AG04450 (cell line): ENCODE measurements at regions of chr4 and their contacts with region 1.

Region 1: DNA sequence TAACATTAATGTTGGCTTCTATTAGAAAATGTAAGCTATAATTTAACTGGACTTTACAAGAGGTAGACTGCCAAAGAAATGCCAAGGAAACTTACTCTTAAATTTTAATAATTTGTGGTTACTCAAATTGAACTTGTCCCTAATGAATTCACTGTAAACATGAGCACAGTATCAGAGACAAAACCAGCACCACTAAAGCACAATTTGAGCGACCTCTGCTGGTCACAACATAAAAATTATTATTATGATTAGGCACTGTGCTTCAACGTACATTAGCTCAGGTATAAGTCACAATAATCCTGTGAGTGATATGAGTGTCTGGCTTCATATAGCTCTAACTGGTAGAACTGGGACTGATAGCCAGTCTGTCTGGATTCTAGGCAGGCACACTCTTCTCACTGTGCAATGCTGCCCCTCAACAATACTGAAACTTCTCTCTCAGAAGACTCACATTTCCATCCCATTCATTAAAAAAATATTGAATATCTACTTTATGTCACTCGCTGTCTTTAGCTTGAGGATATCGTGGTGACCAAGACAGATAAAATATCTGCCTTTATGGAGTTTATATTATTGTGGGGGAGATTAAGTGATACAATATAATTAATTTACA is 8.0 kb downstream of the NUDT6 start:
- DNase-seq: peak; percentile 29
- H3K4me3 ChIP-seq: peak overlapping the region; percentile 11; the same call in 1 of the 2 replicates
- H3K27ac ChIP-seq: no peak overlapping the region
- H3K27me3 ChIP-seq: no peaks in the 10 kb centered on the region
- CTCF ChIP-seq: peak; percentile 59

Region 2: DNA sequence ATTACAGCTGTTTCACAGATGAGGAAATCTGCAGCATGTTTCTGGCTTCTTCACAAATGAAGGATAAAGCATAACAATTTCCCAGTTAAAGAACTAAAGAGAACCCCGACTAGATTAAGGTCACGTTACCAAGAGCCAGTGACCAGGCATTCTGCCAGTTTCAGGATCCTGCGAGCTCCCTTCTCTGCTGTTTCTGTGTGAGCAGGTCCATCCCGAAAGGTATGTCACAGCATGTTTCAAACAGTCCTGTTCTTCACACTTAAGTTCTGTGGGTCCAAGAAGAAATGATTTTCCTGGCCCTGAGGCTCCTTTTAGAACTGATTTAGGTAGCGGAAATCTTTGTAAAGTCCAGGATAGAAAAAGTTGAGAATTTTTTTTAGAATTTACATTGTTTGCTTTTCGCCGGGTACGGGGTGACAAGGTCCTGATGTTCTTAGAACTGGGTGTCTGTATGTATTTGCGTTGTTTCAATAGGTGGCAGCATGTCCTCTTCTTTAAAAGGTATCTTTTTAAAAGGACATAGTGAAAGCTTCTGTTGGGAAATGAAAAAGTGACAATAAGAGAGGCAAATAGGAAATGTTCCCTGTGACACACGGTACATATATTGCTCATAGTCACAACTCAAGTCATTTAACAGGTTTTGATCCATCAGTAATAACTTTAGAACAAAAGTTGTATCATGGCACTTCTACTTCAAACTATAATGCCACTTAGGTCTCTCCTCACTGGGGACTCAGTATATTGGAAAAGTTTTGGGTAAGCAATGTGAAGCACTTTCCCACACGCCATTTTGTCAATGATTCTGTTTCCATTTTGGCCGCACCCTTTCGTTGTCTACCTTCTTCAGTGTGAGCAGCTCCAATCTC is 311.9 kb before region 1 on chr4:
- CTCF ChIA-PET with region 1: interaction called, 24 read pairs
- POLR2A ChIA-PET with region 1: no interaction called
- DNase-seq: no peak
- H3K4me3 ChIP-seq: no peak overlapping the region
- H3K27ac ChIP-seq: no peak overlapping the region
- H3K27me3 ChIP-seq: no peaks in the 10 kb centered on the region
- CTCF ChIP-seq: peak; percentile 50

Region 3: DNA sequence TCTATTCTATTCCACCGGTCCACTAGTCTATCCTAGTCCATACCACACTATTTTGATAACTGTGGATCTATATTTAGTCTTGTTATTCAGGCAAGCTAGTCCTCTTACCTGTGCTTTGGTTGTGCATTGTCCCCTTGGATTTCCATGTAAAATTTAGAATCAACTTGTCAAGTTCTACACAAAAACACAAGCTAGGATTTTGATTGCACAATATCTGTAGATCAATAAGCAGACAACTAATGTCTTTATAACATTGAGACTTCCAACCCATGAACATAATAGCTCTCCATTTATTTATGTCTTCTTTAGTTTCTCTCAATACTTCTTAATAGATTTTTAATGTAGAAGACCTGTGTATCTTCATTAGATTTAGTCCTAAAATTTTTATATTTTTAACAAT is 192.1 kb before region 1 on chr4:
- CTCF ChIA-PET with region 1: interaction called, 40 read pairs
- POLR2A ChIA-PET with region 1: no interaction called
- DNase-seq: no peak
- H3K4me3 ChIP-seq: no peak overlapping the region
- H3K27ac ChIP-seq: no peak overlapping the region
- H3K27me3 ChIP-seq: no peaks in the 10 kb centered on the region
- CTCF ChIP-seq: no peak

Region 4: GRCh38 chr4:122744229-122744628 is 170.2 kb before region 1 on chr4:
- CTCF ChIA-PET with region 1: interaction called, 13 read pairs
- POLR2A ChIA-PET with region 1: no interaction called
- DNase-seq: no peak
- H3K4me3 ChIP-seq: no peak overlapping the region
- H3K27ac ChIP-seq: no peak overlapping the region
- H3K27me3 ChIP-seq: no peaks in the 10 kb centered on the region
- CTCF ChIP-seq: no peak

Region 5: GRCh38 chr4:122764821-122765215 is 149.6 kb before region 1 on chr4:
- CTCF ChIA-PET with region 1: interaction called, 87 read pairs
- POLR2A ChIA-PET with region 1: no interaction called
- DNase-seq: peak; percentile 54
- H3K4me3 ChIP-seq: no peak overlapping the region; the same call in 1 of the 2 replicates
- H3K27ac ChIP-seq: no peak overlapping the region
- H3K27me3 ChIP-seq: no peaks in the 10 kb centered on the region
- CTCF ChIP-seq: no peak

Region 6: DNA sequence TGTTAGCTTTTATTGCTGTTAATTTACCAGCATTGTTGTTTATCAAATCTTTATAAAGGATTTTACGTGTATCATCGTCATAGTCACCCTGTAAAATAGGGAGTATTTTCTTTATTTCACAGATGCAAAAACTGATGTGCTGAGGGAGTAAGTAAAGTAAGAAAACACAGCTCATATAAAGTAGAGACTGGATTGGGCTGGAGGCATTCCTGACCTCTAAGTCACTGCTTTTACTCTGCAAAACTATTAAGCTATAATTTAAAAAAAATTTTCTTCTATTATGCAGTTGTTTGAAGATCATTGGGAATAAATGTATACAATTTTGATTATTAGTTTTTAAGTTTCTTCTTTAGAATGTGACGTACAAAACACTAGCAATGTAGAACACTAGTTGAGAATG is 37.9 kb before region 1 on chr4:
- CTCF ChIA-PET with region 1: interaction called, 12 read pairs
- POLR2A ChIA-PET with region 1: no interaction called
- DNase-seq: no peak
- H3K4me3 ChIP-seq: no peak overlapping the region
- H3K27ac ChIP-seq: no peak overlapping the region
- H3K27me3 ChIP-seq: no peaks in the 10 kb centered on the region
- CTCF ChIP-seq: no peak

Region 7: DNA sequence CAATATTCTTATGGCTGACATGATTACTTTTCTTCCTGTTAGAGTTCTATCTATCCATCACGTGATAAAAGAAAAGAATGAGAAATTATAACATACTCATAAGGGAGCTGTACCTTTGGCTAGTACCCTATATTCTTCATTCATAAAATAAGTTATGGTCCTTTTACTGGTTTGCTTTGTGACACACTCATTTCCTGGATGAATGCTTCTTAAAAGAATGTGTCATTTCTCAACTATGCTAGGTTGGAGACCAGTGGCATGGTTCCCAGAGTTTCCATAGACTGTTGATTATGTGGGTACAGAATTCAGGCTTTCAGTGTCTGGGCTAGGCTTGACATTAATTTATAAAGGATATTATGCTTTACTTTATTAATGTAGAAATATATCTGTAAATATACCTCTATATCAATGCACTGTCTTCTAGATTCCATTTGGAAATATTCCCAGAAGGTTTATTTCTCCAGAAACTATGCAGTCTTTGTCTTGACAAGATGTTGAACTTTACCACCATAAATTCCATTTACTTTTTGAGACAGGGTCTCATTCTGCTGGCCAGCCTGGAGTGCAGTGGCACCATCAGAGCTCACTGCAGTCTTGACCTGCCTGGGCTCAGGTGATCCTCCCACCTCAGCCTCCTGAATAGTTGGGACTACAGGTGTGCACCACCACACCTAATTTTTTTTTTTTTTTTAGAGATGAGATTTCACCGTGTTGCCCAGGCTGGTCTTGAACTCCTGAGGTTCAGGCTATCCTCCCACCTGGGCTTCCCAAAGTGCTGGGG is 15.8 kb before region 1 on chr4:
- CTCF ChIA-PET with region 1: interaction called, 47 read pairs
- POLR2A ChIA-PET with region 1: no interaction called
- DNase-seq: peak; percentile 53
- H3K4me3 ChIP-seq: no peak overlapping the region
- H3K27ac ChIP-seq: no peak overlapping the region
- H3K27me3 ChIP-seq: no peaks in the 10 kb centered on the region
- CTCF ChIP-seq: no peak

Region 8: DNA sequence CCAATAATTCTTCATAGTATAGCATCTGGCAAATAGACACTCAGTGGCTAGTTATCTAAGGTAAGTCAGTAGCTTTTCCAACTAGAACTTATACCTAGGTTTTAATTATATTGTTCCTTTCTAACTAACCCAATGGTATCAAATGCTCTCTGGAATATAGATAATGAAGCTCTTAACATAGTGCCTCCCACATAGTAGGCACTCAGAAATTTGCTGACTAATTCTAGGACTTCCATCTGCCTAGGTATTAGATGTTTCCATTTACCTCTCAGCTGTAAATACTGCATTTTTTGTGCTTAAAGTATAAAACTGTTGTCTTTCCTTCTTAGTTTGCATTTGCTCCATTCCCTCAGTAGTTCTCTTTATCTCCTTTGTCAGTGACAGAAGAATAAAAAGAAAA is 267.9 kb after region 1 on chr4:
- CTCF ChIA-PET with region 1: no interaction called
- POLR2A ChIA-PET with region 1: no interaction called
- DNase-seq: no peak
- H3K4me3 ChIP-seq: no peak overlapping the region
- H3K27ac ChIP-seq: no peak overlapping the region
- H3K27me3 ChIP-seq: no peaks in the 10 kb centered on the region
- CTCF ChIP-seq: no peak